ENCODE measurements at regions of chr19 and their contacts with region 1.

Region 1: GRCh38 chr19:15466851-15467733 is 2.7 kb upstream of the RASAL3 start:
- DNase-seq: peak; percentile 79
- ATAC-seq: peak; percentile 45
- H3K4me3 Mint-ChIP-seq: peak overlapping the region; percentile 48
- H3K27ac Mint-ChIP-seq: peak overlapping the region; percentile 85
- H3K4me1 Mint-ChIP-seq: peaks cover 62% of the 10 kb centered on the region
- H3K27me3 Mint-ChIP-seq: peaks cover 10% of the 10 kb centered on the region

Region 2: GRCh38 chr19:15432629-15433518 is 34.2 kb before region 1 on chr19:
- CTCF ChIA-PET with region 1: interaction called, 7 read pairs
- POLR2A ChIA-PET with region 1: interaction called, 13 read pairs
- DNase-seq: peak; percentile 95
- ATAC-seq: peak; percentile 89
- H3K4me3 Mint-ChIP-seq: peak overlapping the region; percentile 98
- H3K27ac Mint-ChIP-seq: peak overlapping the region; percentile 98
- H3K4me1 Mint-ChIP-seq: peaks cover 34% of the 10 kb centered on the region
- H3K27me3 Mint-ChIP-seq: no peaks in the 10 kb centered on the region

Region 3: GRCh38 chr19:15449620-15450527 is 17.2 kb before region 1 on chr19 and contains the start of gene WIZ:
- CTCF ChIA-PET with region 1: interaction called, 7 read pairs
- POLR2A ChIA-PET with region 1: interaction called, 25 read pairs
- DNase-seq: peak; percentile 82
- ATAC-seq: peak; percentile 65
- H3K4me3 Mint-ChIP-seq: peak within 1 kb of the TSS; percentile 64
- H3K27ac Mint-ChIP-seq: peak within 1 kb of the TSS; percentile 84
- H3K4me1 Mint-ChIP-seq: peaks cover 33% of the 10 kb centered on the region
- H3K27me3 Mint-ChIP-seq: no peaks in the 10 kb centered on the region
- total RNA-seq, gene WIZ: 31.6 to 32.7 TPM

Region 4: GRCh38 chr19:15511671-15512424 is 44.8 kb after region 1 on chr19:
- CTCF ChIA-PET with region 1: interaction called, 3 read pairs
- POLR2A ChIA-PET with region 1: interaction called, 12 read pairs
- DNase-seq: no peak
- ATAC-seq: no peak
- H3K4me3 Mint-ChIP-seq: no peak overlapping the region
- H3K27ac Mint-ChIP-seq: no peak overlapping the region
- H3K4me1 Mint-ChIP-seq: peaks cover 52% of the 10 kb centered on the region
- H3K27me3 Mint-ChIP-seq: peaks cover 20% of the 10 kb centered on the region